GM12878 (cell line): ENCODE measurements at regions of chr15 and their contacts with region 1.

Region 1: DNA sequence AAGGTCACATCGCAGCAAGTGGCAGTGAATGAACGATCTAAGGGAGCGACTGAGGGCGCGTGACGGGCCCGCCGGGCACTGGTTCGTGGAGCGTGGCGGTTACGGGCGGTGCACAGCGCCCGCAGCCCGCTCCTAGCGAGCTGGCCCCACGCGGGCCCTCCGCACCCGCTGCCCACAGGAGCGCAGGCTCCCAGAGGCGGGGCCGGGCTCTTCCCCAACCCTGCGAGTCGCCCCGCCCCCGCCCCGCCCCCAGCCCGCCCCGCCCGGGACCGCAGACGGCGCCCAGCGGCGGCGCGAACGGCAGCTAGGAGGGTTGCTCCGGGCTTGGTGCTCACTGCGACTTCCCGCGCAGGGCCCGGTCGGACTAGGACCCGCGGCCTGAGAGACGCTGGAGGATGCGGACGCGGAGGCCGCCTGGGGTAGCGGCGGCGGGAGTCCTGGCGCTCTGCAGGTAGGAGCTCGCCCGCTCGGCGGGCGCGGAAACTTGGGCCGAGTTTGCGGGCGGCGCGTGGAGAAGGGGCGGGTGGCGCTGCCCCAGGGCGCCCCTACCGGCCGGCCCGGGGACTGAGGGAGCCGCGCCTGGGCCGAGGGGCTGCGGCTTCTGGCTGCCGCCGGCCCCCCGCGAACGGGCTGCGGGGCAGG is at the start of gene C15orf39:
- DNase-seq: no peak
- ATAC-seq: peak; percentile 55
- H3K4me3 ChIP-seq: peak within 1 kb of the TSS; percentile 88
- H3K27ac ChIP-seq: peak within 1 kb of the TSS; percentile 98
- H3K4me1 ChIP-seq: peaks cover 38% of the 10 kb centered on the region
- H3K27me3 ChIP-seq: no peaks in the 10 kb centered on the region
- CTCF ChIP-seq: peak; percentile 63 to 71 (median 65); a peak in 5 of 6 replicates
- EP300 ChIP-seq: no peak
- POLR2A ChIP-seq: peak; percentile 84
- RAD21 ChIP-seq: peak; percentile 42
- polyA plus RNA-seq, gene C15orf39: 2.3 to 4.9 TPM

Region 2: DNA sequence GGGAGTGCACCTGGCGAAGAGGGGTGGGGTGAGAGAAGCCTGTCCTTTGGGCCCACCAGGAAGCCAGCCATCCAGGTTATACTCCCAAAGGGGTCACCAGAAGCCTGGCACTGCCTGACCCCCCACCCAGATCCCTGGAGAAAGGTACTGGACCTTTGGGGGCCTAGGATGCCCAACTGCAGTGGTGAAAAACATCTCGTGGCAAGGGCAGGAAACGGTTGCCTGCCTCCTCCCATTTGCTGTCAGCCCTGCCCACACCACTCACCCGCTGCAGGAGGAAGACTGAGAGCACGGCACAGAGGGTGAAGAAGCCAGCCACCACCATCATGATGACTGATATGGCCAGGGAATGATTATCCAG is 356.5 kb before region 1 on chr15:
- CTCF ChIA-PET with region 1: no interaction called
- POLR2A ChIA-PET with region 1: no interaction called
- RAD21 ChIA-PET with region 1: no interaction called
- SMC1A ChIA-PET with region 1: no interaction called
- in situ Hi-C with region 1: no loop called
- intact Hi-C with region 1: no loop called
- DNase-seq: no peak
- ATAC-seq: no peak
- H3K4me3 ChIP-seq: no peak overlapping the region
- H3K27ac ChIP-seq: no peak overlapping the region
- H3K4me1 ChIP-seq: peaks cover 18% of the 10 kb centered on the region
- H3K27me3 ChIP-seq: no peaks in the 10 kb centered on the region
- CTCF ChIP-seq: no peak
- EP300 ChIP-seq: no peak
- POLR2A ChIP-seq: no peak
- RAD21 ChIP-seq: no peak

Region 3: DNA sequence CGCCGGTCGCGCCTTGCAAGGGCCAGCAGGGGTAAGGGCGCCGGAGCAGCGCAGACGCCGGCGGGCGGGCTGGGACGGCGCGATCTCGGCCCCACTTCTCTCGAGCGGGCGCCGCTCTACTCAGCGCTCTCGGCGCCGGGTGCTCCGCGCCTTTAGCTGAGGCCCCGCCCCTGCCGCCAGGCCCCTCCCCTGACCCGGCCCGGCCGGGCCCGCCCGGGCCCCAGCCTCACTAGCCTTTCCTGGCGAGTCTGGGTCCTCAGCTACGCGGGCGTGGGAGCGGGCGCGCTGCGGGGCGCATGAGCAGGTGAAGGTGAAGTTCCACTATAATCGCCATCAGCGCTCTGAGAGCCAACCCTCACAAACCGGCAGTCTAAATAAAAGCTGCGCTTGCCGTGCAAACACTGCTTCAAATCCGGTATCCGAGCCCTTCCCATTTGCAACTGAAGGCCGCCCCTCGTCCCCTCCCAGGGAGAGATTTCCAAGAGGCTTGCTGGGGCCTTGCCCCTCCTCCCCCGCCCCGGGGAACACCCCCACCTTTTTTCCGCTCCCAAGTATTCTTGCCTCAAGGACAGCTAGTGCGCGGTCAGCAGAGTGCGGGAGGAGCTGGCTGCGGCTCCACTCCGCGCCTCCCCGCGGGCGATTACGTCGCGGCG is 245.0 kb before region 1 on chr15 and contains the start of gene RPP25:
- CTCF ChIA-PET with region 1: interaction called, 3 read pairs
- POLR2A ChIA-PET with region 1: no interaction called
- RAD21 ChIA-PET with region 1: interaction called, 3 read pairs
- SMC1A ChIA-PET with region 1: no interaction called
- in situ Hi-C with region 1: no loop called
- intact Hi-C with region 1: loop called (anchors 5 kb)
- DNase-seq: no peak
- ATAC-seq: peak; percentile 94
- H3K4me3 ChIP-seq: peak within 1 kb of the TSS; percentile 65
- H3K27ac ChIP-seq: no peak within 1 kb of the TSS
- H3K4me1 ChIP-seq: peaks cover 30% of the 10 kb centered on the region
- H3K27me3 ChIP-seq: peaks cover 8 to 17% of the 10 kb centered on the region in 2 experiments
- CTCF ChIP-seq: no peak
- EP300 ChIP-seq: no peak
- POLR2A ChIP-seq: peak; percentile 76
- RAD21 ChIP-seq: no peak
- polyA plus RNA-seq, gene RPP25: 0.63 to 1.8 TPM

Region 4: DNA sequence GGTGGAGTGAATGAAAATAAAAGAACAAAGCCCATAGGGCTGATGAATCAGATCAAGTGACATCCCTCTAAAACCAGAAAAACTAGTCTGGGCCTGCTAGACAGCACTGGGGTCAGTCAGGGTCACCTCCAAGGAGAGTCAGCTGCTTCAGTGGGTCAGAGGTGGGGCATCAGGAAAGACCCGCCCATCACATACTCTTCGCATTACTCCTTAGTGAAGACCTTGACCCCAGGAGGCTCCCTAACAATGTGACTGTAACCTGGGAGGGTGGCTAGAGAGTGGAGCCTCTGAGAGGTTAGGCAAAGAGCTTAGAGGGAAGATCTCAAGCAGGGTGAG is 165.4 kb before region 1 on chr15:
- CTCF ChIA-PET with region 1: interaction called, 95 read pairs
- POLR2A ChIA-PET with region 1: interaction called, 51 read pairs
- RAD21 ChIA-PET with region 1: interaction called, 65 read pairs
- SMC1A ChIA-PET with region 1: interaction called, 49 read pairs
- in situ Hi-C with region 1: no loop called
- intact Hi-C with region 1: no loop called
- DNase-seq: no peak
- ATAC-seq: no peak
- H3K4me3 ChIP-seq: no peak overlapping the region
- H3K27ac ChIP-seq: no peak overlapping the region
- H3K4me1 ChIP-seq: peaks cover 24% of the 10 kb centered on the region
- H3K27me3 ChIP-seq: no peaks in the 10 kb centered on the region
- CTCF ChIP-seq: no peak
- EP300 ChIP-seq: no peak
- POLR2A ChIP-seq: no peak
- RAD21 ChIP-seq: no peak

Region 5: GRCh38 chr15:75091814-75092213 is 109.9 kb before region 1 on chr15:
- CTCF ChIA-PET with region 1: interaction called, 9 read pairs
- POLR2A ChIA-PET with region 1: interaction called, 16 read pairs
- RAD21 ChIA-PET with region 1: interaction called, 36 read pairs
- SMC1A ChIA-PET with region 1: interaction called, 22 read pairs
- in situ Hi-C with region 1: no loop called
- intact Hi-C with region 1: loop called (anchors 2 kb)
- DNase-seq: peak; percentile 82
- ATAC-seq: peak; percentile 64
- H3K4me3 ChIP-seq: no peak overlapping the region
- H3K27ac ChIP-seq: 0 out of 2 replicates have a peak overlapping the region, but pooled peaks have one; percentile 17
- H3K4me1 ChIP-seq: peaks cover 12% of the 10 kb centered on the region
- H3K27me3 ChIP-seq: no peaks in the 10 kb centered on the region
- CTCF ChIP-seq: no peak
- EP300 ChIP-seq: peak; percentile 55 to 67; a peak in 2 of 4 replicates
- POLR2A ChIP-seq: no peak
- RAD21 ChIP-seq: no peak

Region 6: GRCh38 chr15:75112848-75113492 is 88.8 kb before region 1 on chr15:
- CTCF ChIA-PET with region 1: interaction called, 10 read pairs
- POLR2A ChIA-PET with region 1: interaction called, 13 read pairs
- RAD21 ChIA-PET with region 1: interaction called, 16 read pairs
- SMC1A ChIA-PET with region 1: interaction called, 40 read pairs
- in situ Hi-C with region 1: loop called (anchors 5 kb)
- intact Hi-C with region 1: loop called (anchors 1 kb)
- DNase-seq: peak; percentile 91
- ATAC-seq: peak; percentile 78
- H3K4me3 ChIP-seq: no peak overlapping the region
- H3K27ac ChIP-seq: peak overlapping the region; percentile 99
- H3K4me1 ChIP-seq: peaks cover 62% of the 10 kb centered on the region
- H3K27me3 ChIP-seq: no peaks in the 10 kb centered on the region
- CTCF ChIP-seq: no peak
- EP300 ChIP-seq: peak; percentile 94 to 98; a peak in 3 of 4 replicates
- POLR2A ChIP-seq: no peak
- RAD21 ChIP-seq: no peak; the same call in 1 of the 2 replicates

Region 7: DNA sequence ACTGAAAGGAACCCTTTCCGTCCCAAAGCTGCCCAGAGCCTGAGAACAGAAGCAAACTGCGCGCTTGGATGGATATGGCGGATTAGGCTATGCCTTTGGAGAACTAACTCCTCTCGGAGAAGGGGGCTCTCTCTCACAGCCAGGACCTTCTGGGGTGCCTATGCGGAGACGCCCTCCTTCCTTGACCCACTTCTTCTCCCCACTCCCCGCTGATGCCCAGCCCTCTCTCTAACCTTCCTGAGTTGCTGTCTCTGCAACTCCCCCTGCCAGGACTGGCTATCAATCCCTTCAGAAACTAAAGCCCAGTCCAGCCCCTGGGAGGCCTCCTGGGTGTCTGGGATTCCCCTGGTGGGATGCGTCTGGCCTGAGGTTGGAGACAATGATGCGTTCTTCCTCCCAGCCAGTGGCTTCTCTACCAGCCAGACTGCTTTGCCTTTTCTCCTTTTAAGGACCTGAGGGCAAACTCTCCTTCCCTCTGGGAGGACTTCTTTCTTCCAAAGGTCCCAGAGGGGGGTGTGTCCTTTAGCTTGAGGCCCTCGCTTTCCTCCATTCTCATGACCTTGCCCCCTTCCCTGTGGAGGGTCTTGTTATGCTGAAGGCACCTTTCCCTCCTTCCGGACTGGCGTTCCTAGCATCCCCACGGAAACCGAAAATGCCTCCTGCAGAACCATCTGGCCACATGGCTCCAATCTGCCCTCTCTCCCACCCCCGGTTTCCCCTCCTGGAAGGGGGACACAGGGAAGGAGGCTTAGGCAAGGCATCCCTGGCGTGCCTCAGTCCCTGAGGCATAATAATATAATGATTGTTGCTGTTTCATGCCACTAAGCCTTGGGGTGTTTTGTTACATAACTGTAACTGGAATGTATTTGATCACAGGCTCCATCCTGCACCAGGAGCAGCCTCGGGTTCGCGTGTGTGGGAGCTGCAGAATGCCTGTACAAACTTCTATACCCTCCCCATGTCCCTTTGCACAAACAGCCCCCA is 63.4 kb before region 1 on chr15:
- CTCF ChIA-PET with region 1: interaction called, 4 read pairs
- POLR2A ChIA-PET with region 1: interaction called, 20 read pairs
- RAD21 ChIA-PET with region 1: interaction called, 14 read pairs
- SMC1A ChIA-PET with region 1: interaction called, 14 read pairs
- in situ Hi-C with region 1: loop called (anchors 5 kb)
- intact Hi-C with region 1: no loop called
- DNase-seq: no peak
- ATAC-seq: peak; percentile 21; the same call in 1 of the 3 replicates
- H3K4me3 ChIP-seq: no peak overlapping the region
- H3K27ac ChIP-seq: no peak overlapping the region
- H3K4me1 ChIP-seq: peaks cover 40% of the 10 kb centered on the region
- H3K27me3 ChIP-seq: no peaks in the 10 kb centered on the region
- CTCF ChIP-seq: no peak
- EP300 ChIP-seq: no peak
- POLR2A ChIP-seq: no peak
- RAD21 ChIP-seq: no peak

Region 8: GRCh38 chr15:75164625-75165350 is 36.9 kb before region 1 on chr15:
- CTCF ChIA-PET with region 1: no interaction called
- POLR2A ChIA-PET with region 1: no interaction called
- RAD21 ChIA-PET with region 1: no interaction called
- SMC1A ChIA-PET with region 1: no interaction called
- in situ Hi-C with region 1: no loop called
- intact Hi-C with region 1: no loop called
- DNase-seq: no peak
- ATAC-seq: peak; percentile 63
- H3K4me3 ChIP-seq: no peak overlapping the region
- H3K27ac ChIP-seq: no peak overlapping the region
- H3K4me1 ChIP-seq: peaks cover 4% of the 10 kb centered on the region
- H3K27me3 ChIP-seq: no peaks in the 10 kb centered on the region
- CTCF ChIP-seq: no peak
- EP300 ChIP-seq: no peak
- POLR2A ChIP-seq: no peak
- RAD21 ChIP-seq: no peak